H1 (cell line): ENCODE measurements at regions of chr7 and their contacts with region 1.

Region 1: DNA sequence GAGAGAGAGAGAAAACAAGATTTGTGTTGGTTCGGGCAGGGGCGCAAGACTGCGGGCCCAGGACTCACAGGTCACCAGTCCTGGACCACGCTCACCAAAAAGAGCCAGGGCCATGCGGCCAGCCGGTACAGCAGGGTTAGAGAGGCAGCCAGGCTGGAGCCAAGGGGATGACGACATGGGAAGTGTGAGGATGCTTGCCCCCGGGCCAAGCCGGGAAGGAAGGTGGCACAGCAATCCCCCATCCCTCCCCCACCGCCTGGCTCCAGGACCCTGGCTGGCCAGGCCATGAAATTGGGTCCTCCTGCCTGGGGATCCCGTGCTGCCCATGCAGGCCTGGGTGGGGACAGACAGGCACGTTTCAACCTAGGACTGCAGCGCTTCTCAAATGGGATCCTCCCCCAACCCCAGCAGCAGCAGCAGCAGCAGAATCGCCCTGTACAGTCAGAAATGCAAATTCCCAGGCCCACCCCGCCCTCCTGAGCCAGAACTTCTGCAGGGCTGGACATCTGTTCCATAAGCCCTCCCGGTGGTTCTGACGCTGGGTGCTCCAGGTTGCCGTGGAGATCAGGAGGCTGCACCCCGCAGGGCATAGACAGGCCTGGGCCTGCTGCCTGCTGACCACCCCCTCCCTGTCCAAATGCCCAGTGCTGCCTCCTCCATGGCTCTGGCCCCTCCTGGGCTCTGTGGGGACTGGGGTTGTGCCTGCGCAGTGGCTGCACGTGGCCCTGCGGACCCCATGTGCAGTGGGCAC is 35.0 kb downstream of the YKT6 start:
- DNase-seq: no peak
- H3K4me3 ChIP-seq: no peak overlapping the region
- H3K27ac ChIP-seq: no peak overlapping the region
- H3K4me1 ChIP-seq: peaks cover 0 to 2% (median 0%) of the 10 kb centered on the region in 4 experiments; a peak in 2 of 7 replicates
- H3K27me3 ChIP-seq: no peaks in the 10 kb centered on the region
- CTCF ChIP-seq: no peak
- EP300 ChIP-seq: no peak
- POLR2A ChIP-seq: no peak
- RAD21 ChIP-seq: no peak

Region 2: DNA sequence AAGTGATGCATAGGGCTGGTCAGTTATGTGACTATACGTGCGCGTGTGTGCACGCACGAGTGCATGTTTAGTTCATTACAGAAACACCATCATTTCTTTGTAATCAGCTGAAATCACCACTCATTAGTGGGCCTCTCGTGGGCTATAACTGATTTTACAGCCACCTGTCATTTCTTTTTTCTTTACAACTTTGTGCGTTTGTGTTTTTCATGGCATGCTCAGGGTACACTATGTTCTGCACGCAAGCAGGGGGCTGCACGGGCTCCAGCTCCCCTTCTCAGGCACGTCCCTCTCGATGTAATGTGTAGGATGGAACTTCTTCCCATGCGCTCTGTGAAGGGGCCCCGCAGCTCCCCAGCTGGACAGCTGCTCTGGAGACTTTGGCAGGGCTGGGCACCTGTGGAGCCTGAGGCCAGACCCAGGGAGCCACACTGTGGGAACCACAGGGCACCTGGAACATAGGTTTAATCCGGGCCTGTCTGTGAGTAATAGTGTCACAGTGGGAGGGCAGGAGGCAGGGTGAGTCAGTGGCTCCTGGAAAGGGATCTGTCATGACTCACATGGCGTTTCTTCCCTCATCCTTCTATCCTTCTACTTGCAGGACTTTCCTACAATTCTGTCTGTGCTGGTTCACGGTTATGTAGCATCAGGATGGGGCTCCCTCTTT is 51.4 kb before region 1 on chr7:
- CTCF ChIA-PET with region 1: no interaction called
- POLR2A ChIA-PET with region 1: no interaction called
- DNase-seq: peak in 1 of 2 experiments; percentile 15
- H3K4me3 ChIP-seq: no peak overlapping the region
- H3K27ac ChIP-seq: no peak overlapping the region
- H3K4me1 ChIP-seq: peaks cover 0 to 4% (median 2%) of the 10 kb centered on the region in 4 experiments; a peak in 5 of 7 replicates
- H3K27me3 ChIP-seq: no peaks in the 10 kb centered on the region; a peak in 3 of 7 replicates
- CTCF ChIP-seq: no peak
- EP300 ChIP-seq: no peak
- POLR2A ChIP-seq: no peak
- RAD21 ChIP-seq: no peak

Region 3: GRCh38 chr7:44218418-44219201 is 17.1 kb before region 1 on chr7:
- CTCF ChIA-PET with region 1: interaction called, 19 read pairs
- POLR2A ChIA-PET with region 1: interaction called, 5 read pairs
- DNase-seq: peak; percentile 57 to 79
- H3K4me3 ChIP-seq: peak overlapping the region in 1 of 4 experiments; percentile 19; a peak in 1 of 8 replicates
- H3K27ac ChIP-seq: no peak overlapping the region
- H3K4me1 ChIP-seq: peaks cover 0 to 24% (median 19%) of the 10 kb centered on the region in 4 experiments; a peak in 6 of 7 replicates
- H3K27me3 ChIP-seq: no peaks in the 10 kb centered on the region
- CTCF ChIP-seq: peak in 2 of 3 experiments; percentile 41 to 42; a peak in 2 of 4 replicates
- EP300 ChIP-seq: no peak
- POLR2A ChIP-seq: no peak
- RAD21 ChIP-seq: peak in 1 of 2 experiments; percentile 31; a peak in 3 of 4 replicates

Region 4: DNA sequence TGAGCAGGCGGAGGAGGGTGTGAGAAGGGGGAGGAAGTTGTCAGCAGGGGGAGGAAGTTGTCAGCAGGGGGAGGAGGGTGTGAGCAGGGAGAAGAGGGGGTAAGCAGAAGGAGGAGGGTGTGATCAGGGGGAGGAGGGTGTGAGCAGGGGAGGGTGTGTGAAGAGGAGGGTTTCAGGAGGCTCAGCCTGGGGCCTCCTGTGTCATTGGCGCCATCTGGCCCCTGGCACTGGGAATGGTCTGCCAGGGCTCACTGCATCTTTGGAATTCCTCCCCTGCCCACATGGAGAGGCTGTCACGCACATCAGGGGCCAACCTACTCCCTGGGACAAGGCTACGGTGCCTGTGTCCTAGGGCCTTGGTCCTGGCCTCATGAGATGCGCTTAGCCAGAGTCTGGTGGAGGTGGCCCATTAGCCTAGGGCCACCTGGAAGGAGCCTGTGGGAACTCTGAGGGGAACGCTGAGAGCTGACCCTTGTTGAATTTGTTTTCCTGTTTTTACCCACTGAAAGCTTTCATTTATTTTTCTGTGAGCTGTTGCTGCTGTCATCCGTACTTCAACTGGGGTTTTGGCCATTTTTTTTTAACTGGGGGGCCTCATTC is 71.6 kb after region 1 on chr7:
- CTCF ChIA-PET with region 1: interaction called, 37 read pairs
- POLR2A ChIA-PET with region 1: no interaction called
- DNase-seq: peak in 1 of 2 experiments; percentile 49
- H3K4me3 ChIP-seq: no peak overlapping the region
- H3K27ac ChIP-seq: no peak overlapping the region
- H3K4me1 ChIP-seq: peaks cover 0 to 8% (median 6%) of the 10 kb centered on the region in 4 experiments; a peak in 4 of 7 replicates
- H3K27me3 ChIP-seq: peaks cover 14 to 31% (median 28%) of the 10 kb centered on the region in 4 experiments; a peak in 6 of 7 replicates
- CTCF ChIP-seq: peak; percentile 59 to 76 (median 60)
- EP300 ChIP-seq: no peak
- POLR2A ChIP-seq: no peak
- RAD21 ChIP-seq: peak; percentile 66 to 71

Region 5: GRCh38 chr7:44521347-44522095 is 285.8 kb after region 1 on chr7:
- CTCF ChIA-PET with region 1: no interaction called
- POLR2A ChIA-PET with region 1: no interaction called
- DNase-seq: no peak
- H3K4me3 ChIP-seq: no peak overlapping the region
- H3K27ac ChIP-seq: no peak overlapping the region
- H3K4me1 ChIP-seq: no peaks in the 10 kb centered on the region
- H3K27me3 ChIP-seq: no peaks in the 10 kb centered on the region
- CTCF ChIP-seq: no peak
- EP300 ChIP-seq: no peak
- POLR2A ChIP-seq: no peak
- RAD21 ChIP-seq: no peak